Right ventricle myocardium superior (tissue), 1 donor: ENCODE measurements at regions of chr1 and their contacts with region 1.

Region 1: GRCh38 chr1:163174524-163175437 is 27.9 kb downstream of the RGS5 start:
- DNase-seq: peak; percentile 81
- ATAC-seq: peak; percentile 86

Region 2: GRCh38 chr1:162878000-162878596 is 296.7 kb before region 1 on chr1:
- intact Hi-C with region 1: loop called (anchors 2 kb)
- DNase-seq: peak; percentile 43
- ATAC-seq: peak; percentile 78

Region 3: DNA sequence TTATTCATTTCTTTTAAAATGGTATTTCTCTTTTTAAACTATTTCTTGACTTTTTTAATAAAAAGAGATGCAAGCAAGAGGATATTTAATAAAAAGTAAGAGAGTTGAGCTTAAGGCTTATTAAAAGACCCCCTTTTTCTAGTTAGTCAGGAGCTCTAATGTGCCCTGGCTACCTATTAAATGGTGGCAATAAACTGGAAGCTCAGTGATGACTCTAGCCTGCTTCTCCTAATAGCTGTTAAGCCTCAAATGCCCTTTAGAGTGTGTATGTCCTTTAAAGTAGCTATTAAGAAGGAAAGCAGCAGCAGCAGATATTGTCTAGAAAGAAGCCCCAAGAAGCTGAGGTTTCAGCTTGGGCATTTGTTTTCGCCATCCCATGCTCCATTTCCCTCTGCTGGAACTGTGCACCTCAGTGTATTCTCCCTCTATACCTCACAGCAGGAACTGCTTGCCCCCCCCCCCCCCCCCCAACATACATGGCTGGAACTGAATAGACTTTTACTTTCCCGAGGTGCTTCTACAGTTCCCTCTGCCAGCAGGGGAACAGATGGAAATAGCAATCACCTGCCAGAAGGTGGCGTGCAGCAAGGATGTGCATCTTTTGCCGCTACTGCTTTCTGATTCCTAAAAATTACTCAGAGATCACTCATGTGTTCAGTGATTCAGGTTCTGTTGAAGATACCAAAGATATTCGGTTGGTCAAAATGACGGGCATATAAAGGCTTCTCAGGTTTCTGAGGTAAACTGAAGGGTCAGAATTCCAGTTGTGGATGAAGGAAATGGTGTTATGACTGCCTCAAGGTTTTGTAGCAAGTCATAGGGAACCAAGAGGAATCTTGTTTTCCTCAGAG is 103.2 kb before region 1 on chr1:
- intact Hi-C with region 1: loop called (anchors 5 kb)
- DNase-seq: peak; percentile 53
- ATAC-seq: peak; percentile 70

Region 4: GRCh38 chr1:163315773-163316374 is 141.1 kb after region 1 on chr1:
- intact Hi-C with region 1: loop called (anchors 10 kb)
- DNase-seq: no peak
- ATAC-seq: no peak

Region 5: GRCh38 chr1:163361123-163361934 is 186.5 kb after region 1 on chr1:
- intact Hi-C with region 1: no loop called
- DNase-seq: no peak
- ATAC-seq: no peak